ENCODE measurements at regions of chr15 and their contacts with region 1.

Region 1: GRCh38 chr15:52679232-52680040 is at the start of gene ATOSA:
- DNase-seq: peak; percentile 87 to 89 (median 88)
- ATAC-seq: peak; percentile 91
- H3K4me3 ChIP-seq: peak within 1 kb of the TSS; percentile 87
- H3K27ac ChIP-seq: peak within 1 kb of the TSS; percentile 80
- H3K4me1 ChIP-seq: peaks cover 10 to 14% of the 10 kb centered on the region in 2 experiments; a peak in 4 of 5 replicates
- H3K27me3 ChIP-seq: no peaks in the 10 kb centered on the region; a peak in 1 of 5 replicates
- CTCF ChIP-seq: no peak
- EP300 ChIP-seq: no peak
- POLR2A ChIP-seq: no peak; the same call in 1 of the 2 replicates
- RAD21 ChIP-seq: no peak
- polyA plus RNA-seq, gene ATOSA: 2.0 to 2.1 TPM

Region 2: DNA sequence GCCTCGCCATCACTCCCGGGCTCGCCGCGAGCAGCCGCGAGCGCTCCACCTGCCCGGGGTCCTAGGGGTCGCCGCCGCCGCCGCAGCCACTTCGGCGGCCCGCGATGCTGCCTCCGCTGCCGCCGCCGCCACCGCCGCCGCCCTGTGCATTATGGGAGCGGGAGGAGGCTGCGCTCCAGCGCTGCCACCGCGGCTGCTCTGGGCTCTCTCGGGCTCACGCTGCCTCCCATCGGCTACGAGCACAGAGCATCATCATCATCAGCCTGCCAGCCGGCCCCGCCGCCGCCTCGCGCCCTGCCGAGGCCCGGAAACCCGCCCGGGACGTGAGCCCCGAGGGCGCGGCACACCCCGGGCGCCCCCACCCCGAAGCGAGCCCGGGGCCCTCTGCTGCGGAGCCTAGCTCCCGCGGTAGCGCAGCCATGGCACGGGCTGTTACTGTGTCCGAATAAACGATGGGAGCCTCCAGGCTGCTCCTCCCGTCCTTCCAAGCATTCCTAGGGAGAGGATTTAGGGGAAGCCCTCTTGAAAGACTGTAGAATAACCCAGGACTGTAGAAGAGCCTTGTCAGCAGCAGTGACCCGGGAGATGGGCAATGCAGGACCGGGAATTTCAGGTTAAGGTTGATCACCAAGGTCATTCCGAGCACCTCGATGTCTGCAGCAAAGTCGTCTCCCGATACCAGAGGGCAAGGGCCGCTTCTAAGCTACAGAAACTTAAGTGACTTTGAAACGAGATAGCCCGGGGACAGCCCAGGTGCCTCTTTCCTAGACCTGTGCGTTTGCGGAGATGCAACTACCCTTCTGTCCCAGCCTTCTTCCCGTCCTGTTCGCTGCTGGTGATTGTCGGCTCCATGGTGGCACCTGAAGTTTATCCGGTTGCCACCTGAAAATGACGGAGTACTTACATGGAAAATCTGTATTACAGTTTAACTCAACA is 150.2 kb before region 1 on chr15:
- CTCF ChIA-PET with region 1: no interaction called
- POLR2A ChIA-PET with region 1: no interaction called
- in situ Hi-C with region 1: no loop called
- intact Hi-C with region 1: loop called (anchors 2 kb)
- DNase-seq: peak in 1 of 4 experiments; percentile 47
- ATAC-seq: peak; percentile 77
- H3K4me3 ChIP-seq: peak overlapping the region; percentile 65
- H3K27ac ChIP-seq: no peak overlapping the region
- H3K4me1 ChIP-seq: peaks cover 0 to 14% of the 10 kb centered on the region in 2 experiments; a peak in 3 of 5 replicates
- H3K27me3 ChIP-seq: peaks cover 26 to 39% of the 10 kb centered on the region in 2 experiments
- CTCF ChIP-seq: no peak
- EP300 ChIP-seq: no peak
- POLR2A ChIP-seq: no peak
- RAD21 ChIP-seq: no peak

Region 3: DNA sequence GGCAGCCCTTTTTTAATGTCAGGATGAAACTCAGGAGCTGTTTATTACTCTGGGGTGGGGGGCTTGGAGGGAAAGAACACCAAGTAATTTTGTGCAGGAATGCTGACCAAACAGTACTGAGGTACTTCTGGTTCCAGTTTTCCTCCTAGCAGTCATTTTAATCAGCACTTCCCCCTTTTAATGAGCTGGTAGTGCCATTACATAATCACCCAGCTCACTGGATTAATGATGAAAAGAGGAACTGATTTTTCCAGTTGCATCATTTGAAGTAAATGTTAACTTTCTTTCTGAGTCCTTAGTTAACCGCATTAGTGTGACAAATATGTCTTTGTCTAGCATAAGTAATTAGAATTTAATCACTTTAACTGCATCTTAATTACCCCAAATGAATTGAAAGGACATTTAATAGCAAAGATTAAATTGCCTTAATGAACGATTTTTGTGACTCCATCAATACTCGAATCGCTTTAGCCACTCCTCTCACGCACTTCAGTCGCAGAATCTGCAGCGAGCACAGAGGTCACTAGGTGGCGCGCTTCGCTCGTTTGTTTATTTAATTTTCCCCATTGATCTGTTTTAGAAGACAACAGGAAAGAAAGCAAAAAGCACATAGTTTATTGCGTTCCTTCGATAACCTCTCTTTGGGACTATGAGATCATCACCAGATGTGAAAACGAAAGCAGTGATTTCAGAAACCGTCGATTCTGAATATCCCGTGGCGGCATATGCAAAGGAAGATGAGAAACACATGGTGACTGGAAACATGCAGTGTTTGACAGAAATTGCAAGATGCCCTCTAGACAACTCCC is 100.9 kb after region 1 on chr15:
- CTCF ChIA-PET with region 1: no interaction called
- POLR2A ChIA-PET with region 1: no interaction called
- in situ Hi-C with region 1: no loop called
- intact Hi-C with region 1: no loop called
- DNase-seq: peak; percentile 44 to 65 (median 48)
- ATAC-seq: peak; percentile 71
- H3K4me3 ChIP-seq: no peak overlapping the region
- H3K27ac ChIP-seq: no peak overlapping the region
- H3K4me1 ChIP-seq: peaks cover 0 to 5% of the 10 kb centered on the region in 2 experiments; a peak in 1 of 5 replicates
- H3K27me3 ChIP-seq: peaks cover 3 to 15% of the 10 kb centered on the region in 2 experiments; a peak in 3 of 5 replicates
- CTCF ChIP-seq: peak; percentile 63 to 91 (median 83)
- EP300 ChIP-seq: no peak
- POLR2A ChIP-seq: no peak
- RAD21 ChIP-seq: peak; percentile 69 to 80

Region 4: DNA sequence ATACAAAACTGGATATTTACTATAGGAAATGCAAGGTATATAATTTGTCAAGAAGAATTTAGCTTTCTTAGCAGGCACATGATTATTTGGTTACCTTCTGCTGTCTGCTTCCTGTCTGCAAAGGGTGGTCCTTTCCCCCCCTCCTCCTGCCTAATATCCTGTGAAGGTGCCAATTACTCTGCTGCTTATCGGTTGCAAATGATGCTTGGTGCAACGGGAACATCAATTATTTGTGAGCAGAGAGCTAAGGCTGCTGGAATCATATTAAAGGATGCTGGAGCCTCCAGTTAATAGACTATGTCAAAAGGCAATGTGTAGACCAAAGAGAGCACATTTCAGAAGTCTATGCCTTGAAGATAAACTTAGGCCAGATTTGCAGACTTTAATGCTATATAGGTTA is 554.4 kb after region 1 on chr15:
- CTCF ChIA-PET with region 1: no interaction called
- POLR2A ChIA-PET with region 1: no interaction called
- in situ Hi-C with region 1: no loop called
- intact Hi-C with region 1: no loop called
- DNase-seq: no peak
- ATAC-seq: no peak
- H3K4me3 ChIP-seq: no peak overlapping the region
- H3K27ac ChIP-seq: no peak overlapping the region
- H3K4me1 ChIP-seq: no peaks in the 10 kb centered on the region
- H3K27me3 ChIP-seq: no peaks in the 10 kb centered on the region
- CTCF ChIP-seq: no peak
- EP300 ChIP-seq: no peak
- POLR2A ChIP-seq: no peak
- RAD21 ChIP-seq: no peak

Measured in K562 (cell line).